WTC11 (cell line): ENCODE measurements at regions of chr3 and their contacts with region 1.

Region 1: GRCh38 chr3:57179580-57180410 is 14.6 kb upstream of the IL17RD start:
- DNase-seq: no peak
- ATAC-seq: peak; percentile 92
- H3K4me3 Mint-ChIP-seq: no peak overlapping the region
- H3K27ac Mint-ChIP-seq: no peak overlapping the region
- H3K4me1 Mint-ChIP-seq: peaks cover 14% of the 10 kb centered on the region
- H3K27me3 Mint-ChIP-seq: no peaks in the 10 kb centered on the region
- CTCF ChIP-seq: no peak

Region 2: DNA sequence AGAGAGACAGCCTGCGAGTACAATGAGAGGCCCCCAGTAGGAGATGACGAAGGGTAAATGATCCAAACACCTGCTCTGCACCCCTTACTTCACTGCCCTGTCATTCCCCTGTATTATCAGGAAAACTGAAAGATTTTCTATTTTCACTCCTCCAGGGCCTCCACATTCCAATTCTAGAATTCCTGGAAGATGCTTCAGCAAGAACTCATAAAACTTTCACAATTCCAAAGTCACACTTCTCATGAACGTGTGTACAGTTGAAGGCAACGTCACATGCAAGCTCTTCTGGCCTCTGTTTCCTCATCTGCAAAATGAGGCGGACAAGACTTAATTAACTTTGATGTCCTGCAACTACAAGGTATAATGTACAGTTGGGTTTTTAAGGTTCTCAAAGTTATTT is 182.1 kb before region 1 on chr3:
- CTCF ChIA-PET with region 1: no interaction called
- POLR2A ChIA-PET with region 1: no interaction called
- DNase-seq: no peak
- ATAC-seq: no peak
- H3K4me3 Mint-ChIP-seq: no peak overlapping the region
- H3K27ac Mint-ChIP-seq: no peak overlapping the region
- H3K4me1 Mint-ChIP-seq: peaks cover 14% of the 10 kb centered on the region
- H3K27me3 Mint-ChIP-seq: no peaks in the 10 kb centered on the region
- CTCF ChIP-seq: no peak

Region 3: GRCh38 chr3:57221883-57222282 is 42.1 kb after region 1 on chr3:
- CTCF ChIA-PET with region 1: interaction called, 10 read pairs
- POLR2A ChIA-PET with region 1: no interaction called
- DNase-seq: no peak
- ATAC-seq: peak; percentile 59
- H3K4me3 Mint-ChIP-seq: no peak overlapping the region
- H3K27ac Mint-ChIP-seq: no peak overlapping the region
- H3K4me1 Mint-ChIP-seq: peaks cover 13% of the 10 kb centered on the region
- H3K27me3 Mint-ChIP-seq: no peaks in the 10 kb centered on the region
- CTCF ChIP-seq: no peak